ENCODE measurements at regions of chr10 and their contacts with region 1.

Region 1: DNA sequence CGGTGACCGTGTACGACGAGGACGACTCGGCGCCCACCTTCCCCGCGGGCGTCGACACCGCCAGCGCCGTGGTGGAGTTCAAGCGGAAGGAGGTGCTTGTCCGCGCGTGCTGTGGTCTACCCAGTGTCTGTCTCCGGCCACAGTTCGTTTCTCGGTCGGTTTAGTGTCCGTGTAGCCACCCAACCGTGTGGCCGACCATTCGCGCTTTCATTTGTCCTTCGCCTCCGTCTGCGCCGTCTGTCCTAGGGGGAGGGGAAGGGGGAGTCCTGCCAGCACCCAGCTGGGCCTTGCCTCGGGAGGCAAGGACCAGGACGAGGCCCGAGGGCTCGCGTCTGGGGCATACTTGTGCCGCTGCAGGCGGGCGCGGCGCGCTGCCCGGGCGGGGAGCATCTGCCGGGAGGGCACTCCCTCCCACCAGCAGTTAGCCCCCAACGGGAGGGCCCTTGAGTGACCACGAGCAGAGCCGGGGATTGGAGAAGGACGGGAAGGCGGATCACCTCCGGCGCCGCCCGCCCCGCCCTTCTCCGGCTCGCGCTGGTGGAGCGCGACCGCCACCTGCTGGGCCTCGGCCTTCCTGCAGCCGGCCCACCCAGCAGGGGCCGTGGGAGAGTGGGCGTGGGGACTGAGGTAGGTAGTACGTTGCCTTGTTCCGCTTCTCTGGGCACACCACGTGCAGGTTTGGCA is 28.4 kb downstream of the RET start:
- DNase-seq: peak in 41 of 42 donors; percentile 33 to 88 (median 74)

Region 2: GRCh38 chr10:42475168-42476098 is 629.8 kb before region 1 on chr10:
- intact Hi-C with region 1: no loop called
- DNase-seq: peak in 41 of 42 donors; percentile 2 to 77 (median 43)

Region 3: DNA sequence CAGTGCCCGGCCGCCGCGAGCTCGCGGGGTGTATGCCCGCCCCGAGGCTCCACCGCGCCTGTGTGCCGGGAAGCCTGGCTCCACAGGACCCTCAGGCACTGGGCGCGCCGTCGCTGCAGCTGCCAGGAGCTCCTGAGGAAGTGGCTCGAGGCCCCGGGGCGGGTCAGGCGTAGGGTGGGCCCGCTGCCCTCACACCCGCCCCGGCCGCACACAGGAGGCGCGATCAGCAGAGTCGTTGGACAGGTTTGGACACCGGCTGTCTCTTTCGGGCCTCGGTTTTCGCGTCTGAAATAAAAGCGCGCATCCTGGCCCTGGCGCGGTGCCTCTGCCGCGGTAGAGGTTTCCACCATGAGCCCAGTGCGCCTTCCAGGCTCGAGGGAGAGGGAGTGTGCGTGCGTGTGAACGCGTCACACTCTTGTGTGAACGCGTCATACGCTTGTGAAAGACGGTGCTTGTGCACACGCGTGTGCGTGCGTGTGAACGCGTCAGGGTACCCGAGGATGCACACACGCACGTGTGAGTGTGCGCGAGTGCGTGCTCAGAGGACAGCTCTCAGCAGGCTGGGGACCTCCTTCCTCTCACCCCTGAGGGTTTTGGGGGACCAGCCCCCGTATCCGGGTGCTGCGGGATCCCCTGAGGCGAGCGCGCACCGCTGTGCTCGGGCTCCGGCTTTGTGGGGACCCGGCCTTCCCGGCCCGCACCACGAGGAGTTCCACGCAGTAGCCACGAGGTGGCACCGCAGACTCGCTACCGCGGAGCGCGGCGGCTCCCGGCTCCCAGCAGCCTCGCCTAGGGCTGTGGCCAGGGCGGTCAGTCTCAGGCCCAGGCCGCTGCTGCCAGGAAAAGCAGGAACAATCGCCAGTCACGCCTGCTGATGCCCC is 238.9 kb before region 1 on chr10:
- intact Hi-C with region 1: loop called (anchors 2 kb)
- DNase-seq: peak; percentile 45 to 92 (median 83)